GM10248 (cell line): ENCODE measurements at regions of chr11 and their contacts with region 1.

Region 1: GRCh38 chr11:85359859-85360258 is 267.3 kb downstream of the DLG2 start:
- DNase-seq: no peak
- CTCF ChIP-seq: no peak

Region 2: GRCh38 chr11:85137597-85137996 is 222.3 kb before region 1 on chr11:
- CTCF ChIA-PET with region 1: no interaction called
- POLR2A ChIA-PET with region 1: no interaction called
- DNase-seq: no peak
- CTCF ChIP-seq: no peak

Region 3: GRCh38 chr11:85377901-85378300 is 18.0 kb after region 1 on chr11:
- CTCF ChIA-PET with region 1: interaction called, 14 read pairs
- POLR2A ChIA-PET with region 1: no interaction called
- DNase-seq: no peak
- CTCF ChIP-seq: no peak

Region 4: DNA sequence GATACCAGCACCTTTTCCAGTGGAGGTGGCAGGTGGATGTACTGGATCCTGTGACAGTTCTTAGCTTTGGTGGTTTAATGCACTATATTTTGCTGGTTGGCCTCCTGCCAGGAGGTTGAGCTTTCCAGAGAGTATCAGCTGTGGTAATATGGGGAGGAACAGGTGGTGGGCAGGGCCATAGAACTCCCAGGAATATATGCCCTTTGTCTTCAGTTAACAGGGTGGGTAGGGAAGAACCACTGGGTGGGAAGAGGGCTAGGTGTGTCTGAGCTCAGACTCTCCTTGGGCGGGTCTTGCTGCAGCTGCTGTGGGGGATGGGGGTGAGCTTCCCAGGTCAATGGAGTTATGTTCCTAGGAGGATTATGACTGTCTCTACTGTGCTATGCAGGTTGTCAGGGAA is 63.4 kb after region 1 on chr11:
- CTCF ChIA-PET with region 1: no interaction called
- POLR2A ChIA-PET with region 1: no interaction called
- DNase-seq: no peak
- CTCF ChIP-seq: no peak